SK-N-SH (cell line): ENCODE measurements at regions of chr18 and their contacts with region 1.

Region 1: GRCh38 chr18:12038639-12039417 is 54.8 kb upstream of the ANKRD62 start:
- DNase-seq: peak; percentile 86
- H3K4me3 ChIP-seq: peak overlapping the region; percentile 33 to 60
- H3K27ac ChIP-seq: no peak overlapping the region
- H3K4me1 ChIP-seq: peaks cover 0 to 2% of the 10 kb centered on the region in 2 experiments; a peak in 1 of 4 replicates
- H3K27me3 ChIP-seq: peaks cover 65% of the 10 kb centered on the region
- CTCF ChIP-seq: peak; percentile 93
- EP300 ChIP-seq: no peak
- RAD21 ChIP-seq: peak; percentile 82

Region 2: GRCh38 chr18:11654736-11655605 is 383.9 kb before region 1 on chr18:
- CTCF ChIA-PET with region 1: interaction called, 10 read pairs
- POLR2A ChIA-PET with region 1: no interaction called
- DNase-seq: peak; percentile 59
- H3K4me3 ChIP-seq: peak overlapping the region in 1 of 2 experiments; percentile 55; a peak in 1 of 4 replicates
- H3K27ac ChIP-seq: no peak overlapping the region
- H3K4me1 ChIP-seq: no peaks in the 10 kb centered on the region
- H3K27me3 ChIP-seq: peaks cover 51% of the 10 kb centered on the region
- CTCF ChIP-seq: peak; percentile 73
- EP300 ChIP-seq: no peak
- RAD21 ChIP-seq: peak; percentile 61

Region 3: DNA sequence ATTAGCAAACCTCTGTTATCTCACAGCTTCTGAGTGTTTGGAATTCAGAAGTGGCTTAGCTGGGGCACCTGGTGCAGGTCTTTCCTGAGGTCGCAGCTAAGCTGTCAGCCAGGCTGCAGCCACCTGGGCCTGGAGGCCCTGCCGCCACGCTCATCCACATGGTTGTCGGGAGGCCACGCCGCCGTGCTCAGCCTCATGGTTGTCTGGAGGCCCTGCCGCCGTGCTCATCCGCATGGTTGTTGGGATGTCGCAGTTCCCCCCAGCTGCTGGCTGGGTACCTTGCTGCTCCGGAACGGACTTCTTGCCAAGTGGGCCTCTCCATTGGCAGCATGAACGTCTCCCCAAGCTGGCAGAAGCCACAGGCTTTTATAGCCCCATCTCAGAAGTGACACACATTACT is 106.4 kb before region 1 on chr18:
- CTCF ChIA-PET with region 1: interaction called, 117 read pairs
- POLR2A ChIA-PET with region 1: no interaction called
- DNase-seq: no peak
- H3K4me3 ChIP-seq: no peak overlapping the region
- H3K27ac ChIP-seq: no peak overlapping the region
- H3K4me1 ChIP-seq: no peaks in the 10 kb centered on the region
- H3K27me3 ChIP-seq: peaks cover 74% of the 10 kb centered on the region
- CTCF ChIP-seq: no peak
- EP300 ChIP-seq: no peak
- RAD21 ChIP-seq: no peak

Region 4: GRCh38 chr18:11947214-11948191 is 91.3 kb before region 1 on chr18:
- CTCF ChIA-PET with region 1: interaction called, 28 read pairs
- POLR2A ChIA-PET with region 1: no interaction called
- DNase-seq: no peak
- H3K4me3 ChIP-seq: no peak overlapping the region
- H3K27ac ChIP-seq: no peak overlapping the region
- H3K4me1 ChIP-seq: no peaks in the 10 kb centered on the region
- H3K27me3 ChIP-seq: no peaks in the 10 kb centered on the region; the same call in 1 of the 2 replicates
- CTCF ChIP-seq: no peak
- EP300 ChIP-seq: no peak
- RAD21 ChIP-seq: no peak

Region 5: DNA sequence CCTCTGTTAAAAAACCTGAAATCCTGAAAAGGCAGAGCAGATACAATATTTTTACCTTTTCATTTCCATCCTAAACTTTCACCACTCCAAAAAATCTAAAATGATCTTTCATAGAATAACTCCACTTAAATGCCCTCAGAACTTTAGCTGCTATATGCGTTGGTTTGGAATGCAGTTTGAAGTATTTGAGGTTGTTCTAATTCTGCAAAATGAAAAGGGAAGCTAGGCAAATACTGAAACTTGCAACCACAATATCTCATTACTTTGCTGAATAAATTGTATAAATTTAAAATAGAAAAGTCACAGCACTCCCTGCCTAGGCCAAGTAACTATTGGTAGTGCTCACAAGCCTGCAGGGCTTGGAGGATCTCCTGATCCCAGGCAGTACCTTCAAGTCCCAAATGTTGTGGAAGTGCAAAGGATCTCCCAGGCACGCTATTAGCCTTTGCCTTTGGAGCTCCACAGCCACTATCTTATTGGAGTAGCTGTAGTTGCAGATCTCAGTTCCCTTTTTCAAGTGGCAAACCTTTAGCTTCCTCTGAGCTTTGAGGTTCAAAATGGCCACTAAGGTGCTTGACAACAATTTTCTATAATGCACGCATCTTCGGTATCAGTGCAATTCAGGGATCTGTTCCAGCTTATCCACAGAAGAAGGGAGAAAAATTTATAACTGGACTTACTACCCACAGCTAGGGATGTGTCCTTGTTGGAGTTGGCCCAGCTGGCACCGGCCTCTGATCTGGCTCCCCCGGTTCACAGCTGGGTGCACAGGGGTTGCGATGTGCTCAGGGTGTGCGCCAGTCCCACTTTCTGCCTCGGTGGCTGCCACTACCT is 11.4 kb after region 1 on chr18:
- CTCF ChIA-PET with region 1: interaction called, 24 read pairs
- POLR2A ChIA-PET with region 1: no interaction called
- DNase-seq: no peak
- H3K4me3 ChIP-seq: no peak overlapping the region
- H3K27ac ChIP-seq: no peak overlapping the region
- H3K4me1 ChIP-seq: no peaks in the 10 kb centered on the region
- H3K27me3 ChIP-seq: peaks cover 30% of the 10 kb centered on the region
- CTCF ChIP-seq: no peak
- EP300 ChIP-seq: no peak
- RAD21 ChIP-seq: no peak

Region 6: DNA sequence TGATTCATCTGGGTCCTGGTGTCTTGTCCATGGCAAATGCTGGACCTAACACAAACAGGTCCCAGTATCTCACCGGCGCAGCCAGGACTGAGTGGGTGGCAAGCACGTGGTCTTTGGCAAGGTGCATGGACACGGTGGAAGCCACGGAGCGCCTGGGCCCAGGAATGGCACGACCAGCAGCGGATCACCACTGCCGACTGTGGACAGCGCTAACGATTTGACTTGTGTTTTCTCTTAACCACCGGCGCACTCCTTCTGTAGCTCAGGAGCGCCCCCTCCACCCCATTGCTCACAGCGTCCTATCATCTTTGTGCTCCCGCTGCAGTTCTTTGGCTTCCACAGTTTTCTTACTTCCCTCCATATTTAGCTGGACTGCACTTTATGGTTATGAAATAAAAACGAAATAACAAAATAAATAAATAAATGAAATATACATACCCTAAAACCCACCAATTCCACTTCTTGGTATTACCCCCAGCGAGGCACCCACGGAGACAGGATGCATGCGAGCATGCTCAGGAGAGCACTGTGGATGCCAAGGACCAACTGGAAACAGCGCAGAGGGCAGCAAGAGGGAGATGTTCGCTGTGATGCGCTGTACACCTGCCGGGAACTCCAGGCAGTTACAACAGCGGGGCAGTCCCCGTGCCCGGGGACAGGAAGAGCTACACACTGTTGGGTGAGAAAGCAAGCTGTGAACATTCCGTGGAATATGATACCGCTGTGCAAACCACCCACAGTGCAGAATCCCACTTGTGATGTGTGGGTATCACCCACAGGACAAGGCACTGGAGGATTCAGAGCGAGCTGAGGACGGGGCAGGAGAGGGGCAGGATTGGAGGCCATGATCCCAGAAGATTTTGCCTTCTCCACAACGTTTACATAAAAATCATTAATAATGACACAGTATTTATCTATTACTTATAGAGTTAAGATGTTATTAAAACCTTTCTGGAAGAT is 208.3 kb after region 1 on chr18:
- CTCF ChIA-PET with region 1: no interaction called
- POLR2A ChIA-PET with region 1: no interaction called
- DNase-seq: peak; percentile 63
- H3K4me3 ChIP-seq: no peak overlapping the region
- H3K27ac ChIP-seq: no peak overlapping the region
- H3K4me1 ChIP-seq: peaks cover 0 to 2% of the 10 kb centered on the region in 2 experiments; a peak in 1 of 4 replicates
- H3K27me3 ChIP-seq: peaks cover 87% of the 10 kb centered on the region
- CTCF ChIP-seq: peak; percentile 46
- EP300 ChIP-seq: no peak
- RAD21 ChIP-seq: peak; percentile 36

Region 7: DNA sequence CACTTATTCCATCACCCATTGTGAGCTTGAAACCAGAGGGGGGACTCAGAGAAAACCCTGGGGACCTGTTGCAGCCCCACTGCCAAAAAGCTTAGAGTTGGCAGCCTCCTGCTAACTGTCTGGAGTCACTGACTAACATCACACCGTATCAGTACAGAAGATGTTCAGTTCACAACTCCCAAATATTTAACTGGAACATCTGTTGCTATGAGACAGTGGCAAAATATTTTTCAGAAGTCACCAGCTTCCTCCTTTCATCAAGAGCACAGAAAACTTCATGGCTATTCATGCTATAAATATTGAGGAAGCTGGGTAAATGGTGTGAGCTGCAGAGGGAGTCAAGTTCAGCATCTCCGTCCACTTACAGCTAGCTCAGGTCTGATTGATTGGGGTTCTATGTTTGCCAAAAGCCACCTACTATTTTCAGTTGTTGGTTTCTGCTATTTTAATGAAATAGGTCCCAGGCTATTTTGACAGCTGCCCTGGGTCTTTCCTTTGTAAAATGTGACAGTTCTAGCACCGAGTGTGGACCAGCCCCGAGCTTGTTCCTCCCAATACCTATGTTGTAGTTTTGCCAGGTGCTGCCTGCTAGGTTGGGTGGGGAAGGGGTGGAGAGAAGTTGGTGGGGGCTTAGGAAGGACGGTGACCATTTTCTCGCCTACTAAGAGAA is 279.0 kb after region 1 on chr18:
- CTCF ChIA-PET with region 1: no interaction called
- POLR2A ChIA-PET with region 1: no interaction called
- DNase-seq: no peak
- H3K4me3 ChIP-seq: no peak overlapping the region
- H3K27ac ChIP-seq: peak overlapping the region in 1 of 2 experiments; percentile 40; a peak in 2 of 4 replicates
- H3K4me1 ChIP-seq: peaks cover 2 to 19% of the 10 kb centered on the region in 2 experiments; a peak in 3 of 4 replicates
- H3K27me3 ChIP-seq: no peaks in the 10 kb centered on the region
- CTCF ChIP-seq: no peak
- EP300 ChIP-seq: no peak
- RAD21 ChIP-seq: no peak